Activated T-helper 2 cell treated with anti-CD3 and anti-CD28 coated beads, Interferon-gamma antibody, Interleukin-2, Interleukin-4, amounts not matched to agents 10 μg/mL and 5 μg/mL and 100 μg/mL, durations not matched to agents 14 hours and 24 hours and 36 hours (primary cell): ENCODE measurements at regions of chr3 and their contacts with region 1.

Region 1: GRCh38 chr3:152281133-152281713 is 12.5 kb downstream of the MBNL1 start:
- DNase-seq: no peak
- H3K4me3 Mint-ChIP-seq: no peak overlapping the region
- H3K27ac Mint-ChIP-seq: peak overlapping the region; percentile 78
- H3K4me1 Mint-ChIP-seq: peaks cover 71% of the 10 kb centered on the region
- H3K27me3 Mint-ChIP-seq: no peaks in the 10 kb centered on the region

Region 2: DNA sequence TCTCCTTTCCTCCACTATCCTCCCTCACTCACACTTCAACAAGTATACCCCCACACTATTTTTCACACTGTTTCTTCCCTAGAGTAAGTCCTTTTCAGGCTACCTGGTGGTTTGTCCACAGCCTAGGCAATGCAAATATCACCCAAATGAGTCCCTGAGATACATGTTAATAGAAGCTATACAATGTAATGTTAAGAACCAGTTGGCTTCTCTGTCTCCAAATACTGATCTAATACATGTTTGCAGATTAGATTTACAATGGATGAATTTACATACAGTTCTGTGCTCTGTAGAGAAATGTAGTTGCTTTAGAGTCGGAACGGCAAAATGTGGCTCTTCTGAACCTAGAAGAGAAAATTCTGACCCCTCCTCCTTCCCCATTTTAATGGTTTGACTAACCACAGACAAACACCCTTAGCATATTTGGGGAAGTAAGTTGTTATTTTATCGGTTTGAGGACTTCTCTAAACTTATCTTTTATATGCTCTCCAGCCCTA is 76.1 kb before region 1 on chr3:
- intact Hi-C with region 1: no loop called
- DNase-seq: no peak
- H3K4me3 Mint-ChIP-seq: peak overlapping the region; percentile 86
- H3K27ac Mint-ChIP-seq: peak overlapping the region; percentile 88
- H3K4me1 Mint-ChIP-seq: peaks cover 73% of the 10 kb centered on the region
- H3K27me3 Mint-ChIP-seq: no peaks in the 10 kb centered on the region

Region 3: DNA sequence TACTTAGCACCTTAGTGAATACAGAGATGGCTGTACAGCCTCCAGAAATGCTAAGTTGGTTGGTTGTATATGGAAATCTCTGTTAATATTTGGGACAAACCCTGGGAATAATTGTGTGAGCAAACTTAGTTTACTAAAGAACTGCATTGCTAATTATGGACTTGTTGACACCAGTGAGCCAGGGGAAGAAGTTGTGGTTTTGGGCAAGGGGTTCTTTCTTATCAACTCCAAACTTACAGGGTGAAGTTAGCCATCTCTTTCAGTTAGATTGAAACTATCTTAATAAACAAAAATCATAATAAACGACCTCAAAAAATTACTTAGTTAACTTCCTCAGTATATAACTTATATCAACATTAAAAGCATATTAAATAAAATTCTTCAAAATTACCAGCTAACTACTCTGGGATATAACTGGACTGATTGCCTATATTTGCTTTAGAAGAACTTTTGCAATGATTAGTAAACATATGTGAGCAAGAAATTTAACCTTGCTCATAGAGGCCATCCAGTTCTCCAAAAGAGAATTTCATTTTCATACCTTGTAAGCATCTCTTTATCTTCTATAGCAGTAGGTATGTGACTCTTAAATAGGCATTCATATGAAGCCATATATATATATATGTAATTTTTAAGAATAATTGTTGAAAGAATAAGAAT is 12.3 kb after region 1 on chr3:
- intact Hi-C with region 1: loop called (anchors 1 kb)
- DNase-seq: no peak
- H3K4me3 Mint-ChIP-seq: no peak overlapping the region
- H3K27ac Mint-ChIP-seq: peak overlapping the region; percentile 24
- H3K4me1 Mint-ChIP-seq: peaks cover 62% of the 10 kb centered on the region
- H3K27me3 Mint-ChIP-seq: no peaks in the 10 kb centered on the region

Region 4: DNA sequence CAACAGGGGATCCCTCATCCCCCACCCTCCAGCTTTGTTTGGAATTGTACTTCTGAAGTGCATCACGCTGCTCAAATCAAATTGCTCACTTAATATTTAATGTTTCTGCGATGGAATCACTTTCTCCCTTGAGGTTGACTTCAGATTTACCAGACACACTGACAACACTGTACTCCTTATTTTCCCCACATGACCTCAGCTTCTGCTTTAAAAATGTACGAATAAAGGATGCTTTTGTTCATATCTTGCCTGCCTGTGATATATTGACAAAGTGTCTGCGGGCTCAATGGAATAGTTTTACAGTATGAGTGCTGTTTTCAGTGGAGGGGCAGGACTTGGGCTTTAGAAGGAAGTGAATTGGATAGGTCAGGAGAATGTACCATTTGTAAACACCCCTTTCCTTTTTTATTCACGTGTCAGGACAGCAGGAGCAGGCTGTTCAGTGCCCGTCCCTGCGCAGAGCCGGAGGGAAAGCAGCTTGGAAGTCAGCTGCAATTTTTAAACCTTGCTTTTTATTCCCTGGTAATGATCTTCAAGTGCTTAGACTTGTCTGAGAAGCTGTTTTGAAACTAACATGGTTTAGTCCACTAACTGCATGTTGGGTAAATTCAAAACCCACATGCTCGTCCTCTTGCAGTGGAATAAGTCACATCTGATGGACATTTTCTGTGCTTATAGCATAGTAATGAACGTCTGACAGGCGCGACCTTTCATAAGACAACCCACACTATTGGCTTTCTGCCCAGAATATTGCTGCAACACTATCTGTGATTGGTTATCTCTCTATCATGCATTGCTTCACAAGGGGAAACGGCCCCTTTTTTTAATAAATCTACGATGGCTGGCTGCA is 17.4 kb after region 1 on chr3:
- intact Hi-C with region 1: loop called (anchors 1 kb)
- DNase-seq: peak; percentile 47
- H3K4me3 Mint-ChIP-seq: peak overlapping the region; percentile 78
- H3K27ac Mint-ChIP-seq: peak overlapping the region; percentile 97
- H3K4me1 Mint-ChIP-seq: peaks cover 66% of the 10 kb centered on the region
- H3K27me3 Mint-ChIP-seq: no peaks in the 10 kb centered on the region

Region 5: DNA sequence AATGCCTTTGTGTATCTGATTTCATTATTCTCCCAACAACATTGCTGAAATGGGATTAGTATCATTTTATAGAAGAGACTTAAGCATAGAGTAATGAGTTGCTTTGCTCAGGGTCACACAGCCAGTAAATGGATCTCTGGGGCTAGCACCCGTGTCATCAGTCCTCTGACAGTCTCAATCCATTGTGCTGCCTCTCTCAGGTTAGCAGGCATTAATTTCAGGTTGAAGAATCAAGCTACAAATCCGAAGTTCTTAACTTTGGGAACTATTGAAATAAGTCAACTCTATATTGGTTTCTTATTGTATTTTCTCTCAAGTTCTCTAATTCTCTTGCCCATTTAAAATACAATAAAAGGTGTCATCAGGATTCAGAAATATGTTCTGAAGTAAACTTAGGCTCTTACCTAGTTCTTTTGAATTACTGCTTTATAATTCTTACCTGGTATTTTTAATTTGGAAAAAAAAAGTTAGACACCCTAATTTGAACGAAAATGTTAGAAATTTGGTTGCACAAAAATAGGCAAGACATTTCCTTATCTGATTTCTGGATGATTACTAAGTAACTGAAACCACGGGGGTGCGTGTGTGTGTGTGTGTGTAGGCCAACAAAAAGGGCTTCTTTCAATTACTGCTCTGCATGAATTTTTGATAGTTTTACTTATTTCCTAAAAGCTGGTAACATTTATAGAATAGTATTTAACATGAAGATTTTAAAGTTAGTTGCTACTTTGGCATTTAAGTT is 177.3 kb after region 1 on chr3:
- intact Hi-C with region 1: loop called (anchors 5 kb)
- DNase-seq: no peak
- H3K4me3 Mint-ChIP-seq: peak overlapping the region; percentile 26
- H3K27ac Mint-ChIP-seq: peak overlapping the region; percentile 39
- H3K4me1 Mint-ChIP-seq: peaks cover 31% of the 10 kb centered on the region
- H3K27me3 Mint-ChIP-seq: no peaks in the 10 kb centered on the region